ENCODE measurements at regions of chr22 and their contacts with region 1.

Region 1: GRCh38 chr22:19730655-19731360 is 7.5 kb downstream of the GP1BB start:
- DNase-seq: peak; percentile 86
- H3K4me3 ChIP-seq: peak overlapping the region; percentile 60
- H3K27ac ChIP-seq: no peak overlapping the region
- H3K4me1 ChIP-seq: peaks cover 9% of the 10 kb centered on the region
- H3K27me3 ChIP-seq: peaks cover 10% of the 10 kb centered on the region
- CTCF ChIP-seq: peak; percentile 97

Region 2: DNA sequence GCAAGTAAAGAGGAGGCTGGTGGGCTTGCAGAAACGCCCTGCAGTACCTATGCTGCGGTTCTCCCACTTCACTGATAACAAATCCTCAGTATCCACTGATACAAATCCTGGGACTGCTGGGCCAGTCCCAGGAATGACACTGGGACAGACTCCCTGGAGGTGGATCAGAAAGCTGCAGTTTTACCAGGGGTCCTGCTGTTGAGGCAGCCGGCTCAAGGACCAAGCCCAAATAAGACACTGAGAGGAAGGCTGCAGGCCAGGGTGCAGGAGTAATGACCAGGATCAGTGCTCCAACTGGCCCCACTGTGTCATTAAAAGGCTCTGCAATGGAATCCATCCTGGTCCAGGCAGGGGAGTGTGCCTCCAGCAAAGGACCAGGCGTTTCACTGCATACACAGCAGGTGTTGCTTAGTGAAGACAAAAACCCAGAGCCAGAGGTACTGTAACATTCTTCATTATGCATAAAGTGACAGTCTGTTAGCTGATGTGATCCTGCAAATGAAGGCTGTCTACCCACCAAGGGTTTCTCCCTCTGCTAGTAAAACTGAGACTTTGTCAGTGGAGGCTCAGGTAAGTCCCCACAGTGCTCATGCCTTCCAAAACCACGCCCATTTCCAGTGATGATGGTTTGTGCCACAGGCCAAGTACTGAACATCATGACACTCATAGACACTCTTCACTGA is 281.9 kb before region 1 on chr22:
- intact Hi-C with region 1: no loop called
- DNase-seq: no peak
- H3K4me3 ChIP-seq: peak overlapping the region; percentile 90
- H3K27ac ChIP-seq: peak overlapping the region; percentile 97
- H3K4me1 ChIP-seq: peaks cover 48% of the 10 kb centered on the region
- H3K27me3 ChIP-seq: no peaks in the 10 kb centered on the region
- CTCF ChIP-seq: no peak

Region 3: DNA sequence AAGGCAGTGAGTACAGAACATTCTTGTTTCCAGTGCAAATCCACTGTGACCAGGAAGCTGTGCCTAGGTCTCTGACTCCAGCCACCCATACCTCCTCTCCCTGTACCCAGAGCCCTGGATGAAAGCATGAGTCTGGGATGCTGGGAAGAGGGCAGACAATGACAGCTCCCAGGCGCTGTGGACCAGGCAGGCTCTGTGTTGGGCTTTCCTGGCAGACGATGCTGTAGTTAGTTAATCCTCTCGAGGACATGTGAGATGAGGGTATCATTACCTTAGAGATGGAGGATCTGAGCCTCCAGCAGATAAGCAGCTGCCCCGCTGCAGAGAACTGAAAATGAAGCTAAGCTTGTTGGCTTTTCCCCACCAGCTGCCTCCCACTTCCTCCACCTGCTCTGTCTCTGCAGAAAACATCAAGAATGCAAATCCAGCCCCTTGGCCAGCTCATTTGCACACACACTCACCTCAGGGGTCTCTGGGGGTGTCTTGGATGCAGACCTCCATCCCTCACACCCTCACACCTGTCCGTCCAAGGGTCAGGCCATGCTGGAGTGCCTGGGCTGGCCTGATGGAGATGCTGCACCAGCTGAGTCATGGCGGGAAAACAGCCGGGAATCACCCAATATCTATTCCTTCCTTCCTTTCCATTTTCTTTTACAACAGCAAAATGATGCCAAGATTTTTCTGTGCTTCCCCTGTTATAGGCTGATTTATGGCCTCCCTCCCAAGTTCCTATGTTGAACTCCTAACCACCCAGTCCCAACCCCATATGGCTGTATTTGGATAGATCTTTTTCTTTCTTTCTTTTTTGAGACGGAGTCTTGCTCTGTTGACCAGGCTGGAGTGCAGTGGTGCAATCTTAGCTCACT is 111.4 kb before region 1 on chr22:
- intact Hi-C with region 1: no loop called
- DNase-seq: no peak
- H3K4me3 ChIP-seq: no peak overlapping the region
- H3K27ac ChIP-seq: no peak overlapping the region
- H3K4me1 ChIP-seq: peaks cover 15% of the 10 kb centered on the region
- H3K27me3 ChIP-seq: peaks cover 54% of the 10 kb centered on the region
- CTCF ChIP-seq: no peak

Region 4: GRCh38 chr22:19909350-19910179 is 178.8 kb after region 1 on chr22:
- intact Hi-C with region 1: loop called (anchors 5 kb)
- DNase-seq: peak; percentile 85
- H3K4me3 ChIP-seq: no peak overlapping the region
- H3K27ac ChIP-seq: no peak overlapping the region
- H3K4me1 ChIP-seq: no peaks in the 10 kb centered on the region
- H3K27me3 ChIP-seq: no peaks in the 10 kb centered on the region
- CTCF ChIP-seq: peak; percentile 87

Region 5: GRCh38 chr22:19986410-19987341 is 255.9 kb after region 1 on chr22:
- intact Hi-C with region 1: no loop called
- DNase-seq: peak; percentile 80
- H3K4me3 ChIP-seq: peak overlapping the region; percentile 94
- H3K27ac ChIP-seq: peak overlapping the region; percentile 94
- H3K4me1 ChIP-seq: peaks cover 79% of the 10 kb centered on the region
- H3K27me3 ChIP-seq: no peaks in the 10 kb centered on the region
- CTCF ChIP-seq: no peak